Activated CD4-positive, alpha-beta T cell treated with anti-CD3 and anti-CD28 coated beads, Interleukin-2, amount 10 ng/mL, durations not matched to agents 7 days and 5 days (primary cell): ENCODE measurements at regions of chr19 and their contacts with region 1.

Region 1: GRCh38 chr19:49409441-49410029 is 13.7 kb downstream of the PTH2 start:
- DNase-seq: peak; percentile 59
- H3K4me3 Mint-ChIP-seq: peak overlapping the region; percentile 51
- H3K27ac Mint-ChIP-seq: peak overlapping the region; percentile 93
- H3K4me1 Mint-ChIP-seq: peaks cover 62% of the 10 kb centered on the region
- H3K27me3 Mint-ChIP-seq: peaks cover 2% of the 10 kb centered on the region

Region 2: DNA sequence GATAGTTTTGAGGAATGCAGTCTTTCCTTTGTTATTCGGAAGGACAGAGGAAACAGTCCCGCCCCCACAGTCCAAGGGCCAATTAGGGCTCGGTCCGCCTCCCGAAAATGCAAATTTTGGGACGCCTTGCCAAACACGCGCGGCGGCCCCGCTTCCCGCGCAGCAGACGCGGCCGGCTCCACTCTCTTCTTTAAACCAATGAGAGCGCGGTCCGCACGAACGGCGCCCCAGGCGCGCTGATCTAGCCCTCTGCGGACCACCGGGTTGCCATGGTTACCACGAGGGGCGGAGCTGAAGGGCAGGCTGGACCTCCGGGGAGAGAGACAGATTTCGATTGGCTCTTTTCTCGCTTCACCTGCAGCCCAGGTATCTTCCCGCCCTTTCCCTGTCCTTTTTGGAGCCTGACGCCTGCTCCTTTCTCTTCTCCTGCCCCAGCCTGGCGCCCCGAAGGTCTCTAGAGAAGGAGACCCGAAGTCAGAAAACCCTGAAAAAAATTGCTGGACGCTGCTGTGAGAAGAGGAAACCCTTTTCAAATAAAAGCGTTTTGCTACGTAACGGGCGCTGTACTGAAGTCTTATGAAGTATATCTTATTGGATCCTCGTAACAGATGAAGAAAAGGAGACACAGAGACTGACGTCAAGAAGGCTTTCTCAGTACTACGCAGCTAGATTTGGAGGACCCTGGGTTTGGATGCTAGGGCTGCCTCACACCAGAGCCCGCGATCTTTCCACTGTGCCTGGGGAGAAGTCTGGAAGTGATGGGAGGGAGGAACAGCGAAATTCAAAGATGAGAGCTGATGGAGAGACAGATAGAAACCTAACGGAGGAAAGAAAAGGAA is 11.7 kb after region 1 on chr19:
- CTCF ChIA-PET with region 1: interaction called, 71 read pairs
- POLR2A ChIA-PET with region 1: no interaction called
- DNase-seq: peak; percentile 55
- H3K4me3 Mint-ChIP-seq: peak overlapping the region; percentile 15
- H3K27ac Mint-ChIP-seq: peak overlapping the region; percentile 81
- H3K4me1 Mint-ChIP-seq: peaks cover 53% of the 10 kb centered on the region
- H3K27me3 Mint-ChIP-seq: peaks cover 81% of the 10 kb centered on the region

Region 3: DNA sequence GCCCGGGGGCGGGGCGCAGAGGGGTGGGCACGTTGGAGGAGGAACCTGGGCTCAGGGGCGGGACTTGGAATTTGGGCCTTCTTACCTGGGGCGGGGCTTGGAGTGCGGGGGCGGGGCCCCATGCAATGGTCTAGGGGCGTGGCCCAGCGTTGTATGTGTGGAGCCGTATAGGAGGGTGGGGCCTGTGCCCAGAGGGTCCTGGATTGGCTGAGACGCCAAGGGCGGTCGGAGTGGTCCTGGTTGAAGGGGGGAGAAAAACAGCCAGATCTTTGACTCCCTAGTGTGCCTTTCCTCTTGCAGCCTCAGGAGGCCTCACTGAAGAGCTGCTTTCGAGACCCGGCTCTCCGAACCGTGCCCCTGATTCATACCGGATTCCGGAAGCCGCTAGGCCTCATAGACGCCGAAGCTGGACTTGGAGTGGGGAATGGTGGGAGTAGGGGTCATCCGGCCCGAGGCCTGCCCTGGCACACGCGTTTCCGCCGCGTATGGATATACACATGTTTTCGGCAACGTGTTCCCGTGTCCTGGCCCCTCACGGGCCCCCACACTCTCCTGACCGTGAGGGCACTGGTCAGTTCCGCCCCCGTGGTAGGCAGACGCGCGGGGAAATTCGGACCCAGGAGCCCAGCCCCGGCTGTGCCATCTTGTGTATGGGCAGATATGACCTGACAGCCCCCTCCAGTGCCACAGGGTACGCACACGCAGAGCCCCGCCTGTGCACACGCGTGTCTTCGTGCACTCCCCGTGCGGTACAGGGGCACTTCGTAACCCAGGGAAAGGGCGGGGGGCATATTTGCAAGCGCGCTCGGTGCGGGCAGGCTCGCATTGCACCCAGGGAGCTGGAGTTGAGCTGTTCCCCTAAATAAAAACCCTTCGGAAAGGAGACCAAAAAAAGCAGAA is 180.8 kb after region 1 on chr19:
- CTCF ChIA-PET with region 1: no interaction called
- POLR2A ChIA-PET with region 1: no interaction called
- DNase-seq: peak; percentile 96
- H3K4me3 Mint-ChIP-seq: peak overlapping the region; percentile 90
- H3K27ac Mint-ChIP-seq: peak overlapping the region; percentile 97
- H3K4me1 Mint-ChIP-seq: peaks cover 31% of the 10 kb centered on the region
- H3K27me3 Mint-ChIP-seq: peaks cover 5% of the 10 kb centered on the region